Activated CD4-positive, alpha-beta memory T cell treated with anti-CD3 and anti-CD28 coated beads, Interleukin-2, amount 10 ng/mL, durations not matched to agents 7 days and 5 days (primary cell): ENCODE measurements at regions of chr7 and their contacts with region 1.

Region 1: DNA sequence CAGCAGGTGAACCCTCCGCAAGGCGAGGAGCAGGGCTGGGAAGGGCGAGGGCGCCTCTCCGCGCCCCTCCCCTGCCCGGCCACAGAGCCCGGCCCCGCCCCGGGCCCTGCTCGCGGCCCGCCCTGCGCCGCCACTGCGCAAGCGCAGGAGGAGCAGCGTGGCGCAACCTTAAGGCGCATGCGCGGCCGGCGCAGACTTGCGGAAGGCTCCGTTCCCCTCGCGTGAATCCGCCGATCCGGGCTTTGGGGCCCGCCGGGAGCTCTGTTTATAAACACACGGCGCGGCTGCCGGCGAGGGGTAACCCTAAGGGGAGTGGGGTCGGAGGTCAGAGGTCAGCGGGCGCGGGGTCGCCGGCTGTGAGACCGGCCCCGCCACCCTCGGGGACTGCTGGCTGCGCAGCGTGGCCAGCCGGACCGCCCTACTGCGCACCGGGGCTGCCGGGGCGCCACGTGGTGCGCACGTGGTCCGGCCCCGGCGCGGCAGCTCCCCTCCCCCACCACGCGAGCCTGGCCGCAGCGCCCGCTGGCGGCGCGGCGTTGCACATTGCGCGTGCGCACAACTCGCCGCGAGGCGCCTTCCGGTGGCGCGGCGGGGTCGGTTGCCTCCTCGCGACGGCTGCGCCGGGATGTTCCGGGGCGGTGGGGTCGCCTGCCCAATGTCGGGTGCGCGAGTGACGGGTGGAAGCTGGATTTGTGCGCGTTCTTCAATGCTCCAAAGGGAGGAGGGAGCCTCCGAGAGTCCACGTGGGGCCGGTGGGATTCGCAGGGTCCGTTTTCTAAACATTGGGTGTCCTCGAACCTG is 40.2 kb upstream of the FOXK1 start:
- DNase-seq: peak; percentile 95
- H3K4me3 Mint-ChIP-seq: peak overlapping the region; percentile 87
- H3K27ac Mint-ChIP-seq: peak overlapping the region; percentile 89
- H3K4me1 Mint-ChIP-seq: peaks cover 25% of the 10 kb centered on the region
- H3K27me3 Mint-ChIP-seq: no peaks in the 10 kb centered on the region

Region 2: DNA sequence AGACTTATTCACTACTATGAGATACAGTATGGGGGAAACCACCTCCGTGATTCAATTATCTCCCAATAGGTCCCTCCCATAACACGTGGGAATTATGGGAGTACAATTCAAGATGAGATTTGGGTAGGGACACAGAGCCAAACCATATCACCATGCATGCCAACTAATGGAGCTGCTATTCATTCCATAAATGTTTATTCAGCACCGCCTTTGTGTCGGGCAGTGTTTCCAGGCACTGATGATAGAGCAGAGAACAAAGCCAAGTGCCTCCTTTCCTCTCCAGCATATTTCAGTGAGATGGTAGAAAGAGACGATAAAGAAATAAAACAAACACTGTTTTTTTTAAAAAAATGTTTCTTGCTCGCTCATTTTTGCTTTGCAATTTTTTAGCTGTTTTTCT is 255.7 kb before region 1 on chr7:
- CTCF ChIA-PET with region 1: no interaction called
- POLR2A ChIA-PET with region 1: no interaction called
- DNase-seq: no peak
- H3K4me3 Mint-ChIP-seq: no peak overlapping the region
- H3K27ac Mint-ChIP-seq: no peak overlapping the region
- H3K4me1 Mint-ChIP-seq: no peaks in the 10 kb centered on the region
- H3K27me3 Mint-ChIP-seq: no peaks in the 10 kb centered on the region

Region 3: DNA sequence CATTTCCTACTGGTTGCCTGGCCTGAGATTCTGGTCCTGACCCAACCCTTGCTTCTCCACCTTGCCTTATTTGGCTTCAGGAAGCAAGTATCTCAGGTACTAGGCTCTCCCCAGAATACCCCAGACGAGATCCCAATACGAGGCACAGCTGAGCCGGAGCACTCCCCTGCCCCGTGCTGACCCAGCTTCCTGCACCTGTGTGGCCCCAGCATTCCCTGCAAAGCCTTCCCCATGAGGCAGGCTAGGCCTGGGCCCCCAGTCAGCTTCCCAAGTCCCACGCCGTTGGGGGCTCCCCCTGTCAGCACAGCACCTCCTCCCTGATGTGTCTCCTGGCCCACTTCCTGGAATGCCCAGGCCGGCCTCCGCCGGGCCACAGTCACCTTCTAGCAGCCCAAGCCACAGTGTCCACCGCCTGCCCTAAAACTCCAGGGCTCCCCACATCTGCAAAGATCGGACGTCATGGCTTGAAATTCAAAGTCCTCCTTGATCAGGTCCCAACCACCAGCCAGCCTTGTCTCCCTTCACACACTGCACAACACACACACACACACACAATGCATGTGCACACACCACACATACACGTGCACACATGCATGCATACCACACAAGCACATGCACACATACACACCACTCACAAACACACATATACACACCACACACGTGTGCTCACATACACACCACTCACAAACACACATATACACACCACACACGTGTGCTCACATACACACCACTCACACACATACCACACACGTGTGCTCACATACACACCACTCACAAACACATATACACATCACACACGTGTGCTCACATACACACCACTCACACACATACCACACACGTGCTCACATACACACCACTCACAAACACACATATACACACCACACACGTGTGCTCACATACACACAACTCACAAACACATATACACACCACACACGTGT is 38.7 kb before region 1 on chr7:
- CTCF ChIA-PET with region 1: no interaction called
- POLR2A ChIA-PET with region 1: no interaction called
- DNase-seq: no peak
- H3K4me3 Mint-ChIP-seq: no peak overlapping the region
- H3K27ac Mint-ChIP-seq: no peak overlapping the region
- H3K4me1 Mint-ChIP-seq: no peaks in the 10 kb centered on the region
- H3K27me3 Mint-ChIP-seq: no peaks in the 10 kb centered on the region

Region 4: DNA sequence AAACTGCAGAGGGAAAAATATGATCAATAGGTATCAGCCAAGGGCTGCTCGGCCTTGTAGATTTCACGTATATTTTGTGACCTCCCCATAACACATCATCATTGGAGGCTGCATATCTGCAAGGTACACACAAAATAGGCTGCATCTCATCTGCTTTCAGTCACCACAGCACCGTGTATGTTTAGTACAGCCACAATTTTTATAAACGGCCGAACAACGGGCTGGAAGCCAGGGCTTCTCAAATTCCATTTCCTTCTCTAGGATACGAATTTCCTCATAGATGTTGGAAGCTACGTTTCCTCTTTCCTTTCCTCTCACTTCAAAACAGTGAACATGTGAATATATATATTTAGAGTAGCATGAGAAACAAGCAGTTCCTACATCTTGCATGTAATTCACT is 20.0 kb after region 1 on chr7:
- CTCF ChIA-PET with region 1: no interaction called
- POLR2A ChIA-PET with region 1: interaction called, 11 read pairs
- DNase-seq: no peak
- H3K4me3 Mint-ChIP-seq: no peak overlapping the region
- H3K27ac Mint-ChIP-seq: no peak overlapping the region
- H3K4me1 Mint-ChIP-seq: peaks cover 6% of the 10 kb centered on the region
- H3K27me3 Mint-ChIP-seq: no peaks in the 10 kb centered on the region

Region 5: GRCh38 chr7:4681886-4682620 is 40.2 kb after region 1 on chr7 and contains the start of gene FOXK1:
- CTCF ChIA-PET with region 1: interaction called, 35 read pairs
- POLR2A ChIA-PET with region 1: interaction called, 153 read pairs
- DNase-seq: peak; percentile 80
- H3K4me3 Mint-ChIP-seq: peak within 1 kb of the TSS; percentile 98
- H3K27ac Mint-ChIP-seq: peak within 1 kb of the TSS; percentile 99
- H3K4me1 Mint-ChIP-seq: peaks cover 24% of the 10 kb centered on the region
- H3K27me3 Mint-ChIP-seq: no peaks in the 10 kb centered on the region
- total RNA-seq, gene FOXK1: 32.7 to 33.2 TPM

Region 6: GRCh38 chr7:4744391-4745264 is 102.8 kb after region 1 on chr7:
- CTCF ChIA-PET with region 1: interaction called, 12 read pairs
- POLR2A ChIA-PET with region 1: interaction called, 36 read pairs
- DNase-seq: peak; percentile 81
- H3K4me3 Mint-ChIP-seq: peak overlapping the region; percentile 85
- H3K27ac Mint-ChIP-seq: peak overlapping the region; percentile 98
- H3K4me1 Mint-ChIP-seq: peaks cover 64% of the 10 kb centered on the region
- H3K27me3 Mint-ChIP-seq: no peaks in the 10 kb centered on the region